Activated CD8-positive, alpha-beta T cell treated with anti-CD3 and anti-CD28 coated beads for 36 hours (primary cell): ENCODE measurements at regions of chr19 and their contacts with region 1.

Region 1: GRCh38 chr19:49866933-49867782 is at the start of gene PNKP:
- DNase-seq: peak; percentile 93
- ATAC-seq: peak; percentile 46
- H3K4me3 Mint-ChIP-seq: no peak within 1 kb of the TSS
- H3K27ac Mint-ChIP-seq: no peak within 1 kb of the TSS
- H3K4me1 Mint-ChIP-seq: peaks cover 46% of the 10 kb centered on the region
- H3K27me3 Mint-ChIP-seq: no peaks in the 10 kb centered on the region
- CTCF ChIP-seq: no peak
- total RNA-seq, gene PNKP: 58.8 to 65.9 TPM

Region 2: GRCh38 chr19:49850473-49851342 is 16.4 kb before region 1 on chr19 and contains the start of gene PTOV1:
- CTCF ChIA-PET with region 1: interaction called, 5 read pairs
- POLR2A ChIA-PET with region 1: interaction called, 64 read pairs
- intact Hi-C with region 1: no loop called
- DNase-seq: peak; percentile 93
- ATAC-seq: peak; percentile 92
- H3K4me3 Mint-ChIP-seq: peak within 1 kb of the TSS; percentile 88
- H3K27ac Mint-ChIP-seq: peak within 1 kb of the TSS; percentile 97
- H3K4me1 Mint-ChIP-seq: peaks cover 42% of the 10 kb centered on the region
- H3K27me3 Mint-ChIP-seq: no peaks in the 10 kb centered on the region
- CTCF ChIP-seq: no peak
- total RNA-seq, gene PTOV1: 87.4 to 88.5 TPM